T-cell (primary cell): ENCODE measurements at regions of chr14 and their contacts with region 1.

Region 1: GRCh38 chr14:76977793-76978720 is 50.5 kb downstream of the IRF2BPL start:
- DNase-seq: peak in 34 of 35 experiments; percentile 44 to 91 (median 80)
- ATAC-seq: peak; percentile 83 to 98 (median 87)
- H3K4me3 ChIP-seq: no peak overlapping the region
- H3K4me3 Mint-ChIP-seq: peak overlapping the region in 1 of 3 donors; percentile 22
- H3K27ac ChIP-seq: peak overlapping the region; percentile 60
- H3K27ac Mint-ChIP-seq: peak overlapping the region; percentile 72 to 76
- H3K4me1 ChIP-seq: peaks cover 3 to 22% of the 10 kb centered on the region in 2 experiments
- H3K4me1 Mint-ChIP-seq: peaks cover 15 to 21% (median 19%) of the 10 kb centered on the region in 3 donors
- H3K27me3 ChIP-seq: no peaks in the 10 kb centered on the region
- H3K27me3 Mint-ChIP-seq: no peaks in the 10 kb centered on the region

Region 2: DNA sequence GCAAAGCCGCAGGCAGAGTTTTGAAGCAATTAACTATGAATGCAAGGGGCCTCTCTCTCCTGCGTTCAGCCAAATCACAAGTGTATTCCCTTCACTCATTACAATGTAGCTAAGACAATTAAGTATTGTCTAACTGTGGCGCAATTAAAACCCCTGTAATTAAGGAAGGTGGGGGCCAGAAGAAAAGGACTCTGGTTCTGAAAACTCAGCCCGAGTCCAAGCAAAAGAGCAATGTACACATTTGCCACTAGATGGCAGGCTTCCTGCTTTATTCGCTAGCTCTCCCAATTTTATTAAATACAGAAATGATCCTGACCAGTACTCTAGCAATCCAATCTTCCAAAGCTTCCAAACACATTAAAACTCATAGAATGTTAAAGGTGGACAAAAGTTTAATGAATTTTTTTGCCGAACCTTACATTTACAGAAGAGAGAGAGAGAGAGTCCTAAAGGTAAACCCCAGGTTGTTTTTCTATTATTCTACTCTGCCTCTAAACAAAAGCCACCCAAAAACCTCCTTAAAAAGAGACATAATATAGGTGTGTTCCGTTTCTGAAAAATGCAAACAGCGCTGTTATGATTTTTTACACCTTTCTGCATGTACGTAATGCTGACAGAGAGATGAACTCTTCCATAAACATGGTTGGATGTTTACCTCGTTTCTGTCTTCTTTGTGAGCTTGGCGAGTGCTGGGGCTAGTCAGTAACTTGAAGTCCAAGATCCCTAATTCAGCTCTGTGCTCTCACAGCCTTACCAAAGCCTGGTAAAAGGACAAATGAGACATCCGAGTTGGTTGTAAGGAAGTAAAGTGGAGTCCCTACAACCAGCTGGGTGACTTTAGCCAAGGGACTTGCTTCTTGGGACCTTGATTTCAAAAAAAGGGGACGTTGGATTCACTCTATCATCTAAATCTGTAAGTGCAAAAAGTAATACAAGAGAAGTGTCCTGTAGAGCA is 267.7 kb before region 1 on chr14:
- CTCF ChIA-PET with region 1: no interaction called
- POLR2A ChIA-PET with region 1: no interaction called
- DNase-seq: peak in 14 of 35 experiments; percentile 3 to 67 (median 8)
- ATAC-seq: peak in 2 of 4 experiments; percentile 28 to 32
- H3K4me3 ChIP-seq: no peak overlapping the region
- H3K4me3 Mint-ChIP-seq: no peak overlapping the region
- H3K27ac ChIP-seq: no peak overlapping the region
- H3K27ac Mint-ChIP-seq: no peak overlapping the region
- H3K4me1 ChIP-seq: no peaks in the 10 kb centered on the region
- H3K4me1 Mint-ChIP-seq: no peaks in the 10 kb centered on the region
- H3K27me3 ChIP-seq: peaks cover 0 to 13% of the 10 kb centered on the region in 2 experiments
- H3K27me3 Mint-ChIP-seq: peaks cover 10 to 14% of the 10 kb centered on the region in 2 donors

Region 3: GRCh38 chr14:76929927-76930326 is 48.1 kb before region 1 on chr14:
- CTCF ChIA-PET with region 1: interaction called in 1 of 2 experiments, 7 read pairs
- POLR2A ChIA-PET with region 1: interaction called, 6 to 13 read pairs
- DNase-seq: peak in 34 of 35 experiments; percentile 46 to 88 (median 65)
- ATAC-seq: peak; percentile 59 to 84 (median 66)
- H3K4me3 ChIP-seq: peak overlapping the region; percentile 11 to 24
- H3K4me3 Mint-ChIP-seq: peak overlapping the region; percentile 56 to 70 (median 61)
- H3K27ac ChIP-seq: peak overlapping the region; percentile 48
- H3K27ac Mint-ChIP-seq: peak overlapping the region; percentile 76 to 88
- H3K4me1 ChIP-seq: peaks cover 36 to 80% of the 10 kb centered on the region in 2 experiments
- H3K4me1 Mint-ChIP-seq: peaks cover 82 to 94% (median 88%) of the 10 kb centered on the region in 3 donors
- H3K27me3 ChIP-seq: no peaks in the 10 kb centered on the region
- H3K27me3 Mint-ChIP-seq: no peaks in the 10 kb centered on the region

Region 4: DNA sequence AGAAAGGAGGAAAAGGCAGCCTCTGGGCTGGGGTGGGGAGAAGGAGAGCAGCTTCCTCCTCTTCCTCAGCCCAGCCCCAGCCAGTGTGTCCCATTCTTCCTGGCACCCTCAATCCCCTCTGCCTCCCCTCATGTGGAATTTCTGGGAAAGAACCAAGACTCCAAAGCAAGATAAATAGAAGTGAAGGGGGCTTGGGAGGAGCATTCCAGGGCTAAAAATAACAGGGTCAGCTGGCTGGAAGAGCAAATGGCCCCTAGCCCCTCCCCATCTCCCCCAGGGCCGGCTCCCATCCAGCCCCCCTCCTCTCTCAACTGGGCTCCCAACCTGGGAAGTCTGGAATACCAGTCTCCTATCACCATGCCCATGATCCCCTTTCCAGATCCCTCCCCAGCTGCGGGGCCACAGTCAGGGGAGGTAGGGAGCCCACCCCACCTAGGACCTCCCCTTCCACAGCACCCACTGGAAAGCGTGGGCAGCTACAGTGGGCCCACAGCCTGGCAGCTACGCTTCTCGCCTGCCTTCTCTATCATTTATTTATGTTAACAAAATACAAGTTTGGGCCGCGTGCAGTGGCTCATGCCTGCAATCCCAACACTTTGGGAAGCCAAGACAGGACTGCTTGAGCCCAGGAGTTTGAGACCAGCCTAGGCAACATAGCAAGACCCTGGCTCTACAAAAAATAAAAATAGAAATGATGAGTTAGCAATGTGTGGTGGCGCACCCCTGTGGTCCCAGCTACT is 37.9 kb before region 1 on chr14:
- CTCF ChIA-PET with region 1: interaction called in 1 of 2 experiments, 3 read pairs
- POLR2A ChIA-PET with region 1: interaction called in 1 of 2 experiments, 12 read pairs
- DNase-seq: no peak
- ATAC-seq: no peak
- H3K4me3 ChIP-seq: no peak overlapping the region
- H3K4me3 Mint-ChIP-seq: no peak overlapping the region
- H3K27ac ChIP-seq: no peak overlapping the region
- H3K27ac Mint-ChIP-seq: no peak overlapping the region
- H3K4me1 ChIP-seq: no peaks in the 10 kb centered on the region
- H3K4me1 Mint-ChIP-seq: peaks cover 11 to 12% (median 12%) of the 10 kb centered on the region in 3 donors
- H3K27me3 ChIP-seq: peaks cover 0 to 2% of the 10 kb centered on the region in 2 experiments
- H3K27me3 Mint-ChIP-seq: no peaks in the 10 kb centered on the region